ENCODE measurements at regions of chr10 and their contacts with region 1.

Region 1: GRCh38 chr10:70619271-70620019 is 16.9 kb upstream of the PRF1 start:
- DNase-seq: no peak
- H3K4me3 Mint-ChIP-seq: no peak overlapping the region
- H3K27ac Mint-ChIP-seq: peak overlapping the region; percentile 88
- H3K4me1 Mint-ChIP-seq: peaks cover 44% of the 10 kb centered on the region
- H3K27me3 Mint-ChIP-seq: peaks cover 7% of the 10 kb centered on the region

Region 2: DNA sequence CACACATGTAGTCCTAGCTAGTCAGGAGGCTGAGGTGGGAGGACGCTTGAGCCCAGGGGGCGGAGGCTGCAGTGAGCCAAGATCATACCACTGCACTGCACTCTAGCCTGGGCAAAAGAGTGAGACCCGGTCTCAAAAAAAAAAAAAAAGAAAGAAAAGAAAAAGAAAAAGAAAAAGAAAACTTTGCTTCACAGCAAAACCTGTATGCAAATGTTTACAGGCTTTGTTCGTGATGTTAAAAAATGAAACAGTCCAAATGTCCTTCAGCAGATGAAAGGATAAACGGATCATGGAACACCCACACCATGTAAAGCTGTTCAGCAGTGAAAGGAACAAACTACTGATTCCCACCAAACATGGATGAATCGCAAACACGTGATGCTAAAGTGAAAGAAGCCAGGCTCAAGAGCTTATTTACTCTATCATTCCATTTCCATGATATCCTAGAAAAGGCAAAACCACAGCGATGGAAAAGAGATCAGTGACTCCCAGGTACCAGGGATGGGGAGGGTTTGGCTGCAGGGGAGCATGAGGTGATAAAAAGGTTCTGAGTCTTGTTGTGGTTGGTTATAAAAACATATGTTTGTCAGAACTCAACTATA is 252.1 kb before region 1 on chr10:
- intact Hi-C with region 1: no loop called
- DNase-seq: no peak
- H3K4me3 Mint-ChIP-seq: no peak overlapping the region
- H3K27ac Mint-ChIP-seq: no peak overlapping the region
- H3K4me1 Mint-ChIP-seq: peaks cover 8% of the 10 kb centered on the region
- H3K27me3 Mint-ChIP-seq: no peaks in the 10 kb centered on the region

Region 3: GRCh38 chr10:70528726-70529362 is 90.6 kb before region 1 on chr10:
- intact Hi-C with region 1: no loop called
- DNase-seq: no peak
- H3K4me3 Mint-ChIP-seq: no peak overlapping the region
- H3K27ac Mint-ChIP-seq: no peak overlapping the region
- H3K4me1 Mint-ChIP-seq: no peaks in the 10 kb centered on the region
- H3K27me3 Mint-ChIP-seq: no peaks in the 10 kb centered on the region

Region 4: DNA sequence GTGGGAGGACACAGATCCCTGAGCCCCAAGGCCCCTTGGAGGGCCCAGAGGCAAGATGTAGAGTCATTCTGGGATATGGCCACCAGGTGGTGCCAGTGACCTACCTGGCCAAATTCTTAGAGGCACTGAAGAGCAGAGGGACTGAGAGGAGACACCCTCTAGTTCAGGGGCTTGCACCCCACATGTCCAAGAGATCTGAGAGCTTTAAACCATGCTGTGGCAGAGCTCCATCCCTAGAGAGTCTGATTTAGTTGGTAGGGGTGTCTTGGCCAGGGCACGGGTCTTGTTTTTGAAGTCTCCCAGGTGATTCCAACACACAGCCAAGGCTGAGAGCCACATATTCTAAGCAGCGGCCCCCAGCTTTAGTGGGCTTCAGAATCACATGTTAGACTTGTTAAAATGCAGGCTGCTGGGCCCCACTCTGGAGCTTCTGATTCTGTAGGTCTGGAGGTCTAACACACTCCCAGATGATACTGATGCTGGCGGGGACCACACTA is 69.4 kb before region 1 on chr10:
- intact Hi-C with region 1: loop called (anchors 1 kb)
- DNase-seq: peak; percentile 58
- H3K4me3 Mint-ChIP-seq: no peak overlapping the region
- H3K27ac Mint-ChIP-seq: no peak overlapping the region
- H3K4me1 Mint-ChIP-seq: peaks cover 4% of the 10 kb centered on the region
- H3K27me3 Mint-ChIP-seq: peaks cover 2% of the 10 kb centered on the region

Region 5: DNA sequence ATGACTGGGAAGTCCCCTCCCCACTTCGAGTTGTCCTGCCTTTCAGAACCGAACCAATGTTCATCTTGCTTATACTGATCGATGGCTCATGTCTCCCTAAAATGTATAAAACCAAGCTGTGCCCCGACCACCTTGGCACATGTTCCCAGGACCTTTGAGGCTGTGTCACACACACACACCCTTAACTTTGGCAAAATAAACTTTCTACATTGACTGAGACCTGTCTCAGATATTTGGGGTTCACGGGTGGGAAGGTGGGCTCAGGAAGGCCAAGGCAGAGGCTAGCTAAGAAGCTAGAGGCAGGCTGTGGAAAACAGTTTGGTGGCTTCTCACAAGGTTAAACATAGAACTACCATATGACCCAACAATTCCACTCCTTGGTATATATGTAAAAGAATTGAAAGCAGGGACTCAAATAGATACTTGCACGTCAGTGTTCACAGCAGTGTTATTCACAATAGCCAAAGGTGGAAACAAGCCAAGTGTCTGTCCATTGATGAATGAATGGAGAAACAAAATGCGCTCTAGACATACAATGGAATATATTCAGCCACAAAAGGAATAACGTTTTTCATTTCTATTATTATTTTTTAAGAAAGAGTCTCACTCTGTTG is 32.3 kb before region 1 on chr10:
- intact Hi-C with region 1: loop called (anchors 1 kb)
- DNase-seq: no peak
- H3K4me3 Mint-ChIP-seq: no peak overlapping the region
- H3K27ac Mint-ChIP-seq: peak overlapping the region; percentile 92
- H3K4me1 Mint-ChIP-seq: peaks cover 26% of the 10 kb centered on the region
- H3K27me3 Mint-ChIP-seq: peaks cover 11% of the 10 kb centered on the region

Region 6: GRCh38 chr10:70656489-70656888 is 37.0 kb after region 1 on chr10:
- intact Hi-C with region 1: loop called (anchors 1 kb)
- DNase-seq: peak; percentile 42
- H3K4me3 Mint-ChIP-seq: peak overlapping the region; percentile 25
- H3K27ac Mint-ChIP-seq: peak overlapping the region; percentile 51
- H3K4me1 Mint-ChIP-seq: peaks cover 26% of the 10 kb centered on the region
- H3K27me3 Mint-ChIP-seq: peaks cover 8% of the 10 kb centered on the region

Region 7: DNA sequence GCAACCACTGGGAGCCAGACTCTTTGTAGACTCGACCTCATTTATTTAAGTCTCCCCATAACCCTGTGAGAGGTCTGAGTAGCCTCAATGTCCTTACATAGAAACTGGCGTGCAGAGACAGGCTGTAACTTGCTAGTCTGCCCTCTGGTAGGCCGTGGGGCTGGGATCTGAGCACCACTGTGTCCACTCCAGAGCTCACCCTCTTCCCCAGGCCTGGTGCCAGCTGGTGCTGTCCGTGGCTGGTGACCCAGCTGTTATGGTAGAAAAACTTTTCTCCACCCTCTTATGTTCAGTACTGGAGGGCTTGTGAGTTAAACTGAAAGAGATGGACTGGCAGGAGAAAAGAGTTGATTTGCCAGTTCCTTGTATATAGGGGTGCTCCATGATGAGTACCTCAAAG is 94.8 kb after region 1 on chr10:
- intact Hi-C with region 1: no loop called
- DNase-seq: no peak
- H3K4me3 Mint-ChIP-seq: no peak overlapping the region
- H3K27ac Mint-ChIP-seq: no peak overlapping the region
- H3K4me1 Mint-ChIP-seq: peaks cover 8% of the 10 kb centered on the region
- H3K27me3 Mint-ChIP-seq: peaks cover 2% of the 10 kb centered on the region

Region 8: DNA sequence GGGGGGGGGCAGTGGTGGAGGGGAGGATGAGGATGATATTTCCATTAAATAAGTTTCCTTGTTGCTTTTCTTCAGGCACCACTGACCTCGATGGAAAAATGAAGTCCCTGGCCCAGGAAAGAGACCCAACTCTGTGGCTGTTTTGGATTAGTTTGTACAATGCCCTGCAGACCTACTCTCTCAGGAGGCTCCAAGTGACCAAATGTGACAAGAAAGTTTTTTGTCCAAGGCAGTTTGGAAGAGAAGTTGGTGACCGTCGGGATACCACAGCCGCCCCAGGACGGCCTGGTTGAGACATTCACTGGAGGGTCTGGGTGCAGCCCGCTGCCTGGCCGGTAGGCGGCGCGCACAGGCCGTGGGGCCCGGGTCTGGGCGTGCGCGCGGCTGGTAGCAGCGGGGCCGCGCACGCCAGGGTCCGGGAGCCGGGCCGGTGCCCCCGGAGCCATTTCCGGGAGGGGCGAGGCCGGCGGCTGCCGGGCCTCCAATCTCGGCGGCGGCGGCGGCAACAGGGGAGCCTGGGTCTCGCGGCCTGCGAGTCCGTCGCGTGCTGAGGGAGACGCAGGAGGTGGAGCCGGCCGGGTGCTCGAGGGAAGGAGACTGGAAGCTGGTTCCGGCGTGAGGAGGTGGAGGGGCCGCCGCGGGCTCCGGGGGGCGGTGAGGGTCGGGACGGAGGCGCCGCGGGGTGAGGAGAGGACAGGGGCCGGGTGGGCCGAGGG is 196.2 kb after region 1 on chr10 and contains the start of gene SGPL1:
- intact Hi-C with region 1: loop called (anchors 2 kb)
- DNase-seq: peak; percentile 80
- H3K4me3 Mint-ChIP-seq: peak within 1 kb of the TSS; percentile 94
- H3K27ac Mint-ChIP-seq: peak within 1 kb of the TSS; percentile 76
- H3K4me1 Mint-ChIP-seq: peaks cover 28% of the 10 kb centered on the region
- H3K27me3 Mint-ChIP-seq: no peaks in the 10 kb centered on the region
- total RNA-seq, gene SGPL1: 72.9 and 79.0 TPM in 2 replicates

Measured in activated T-helper 1 cell treated with anti-CD3 and anti-CD28 coated beads, Interleukin-12 subunit alpha, Interleukin-12 subunit beta, Interleukin-2, Interleukin-4 antibody, amounts not matched to agents 30 ng/mL and 10 ng/mL and 1 ng/mL, durations not matched to agents 14 hours and 24 hours and 36 hours (primary cell).